ENCODE measurements at regions of chr20 and their contacts with region 1.

Region 1: DNA sequence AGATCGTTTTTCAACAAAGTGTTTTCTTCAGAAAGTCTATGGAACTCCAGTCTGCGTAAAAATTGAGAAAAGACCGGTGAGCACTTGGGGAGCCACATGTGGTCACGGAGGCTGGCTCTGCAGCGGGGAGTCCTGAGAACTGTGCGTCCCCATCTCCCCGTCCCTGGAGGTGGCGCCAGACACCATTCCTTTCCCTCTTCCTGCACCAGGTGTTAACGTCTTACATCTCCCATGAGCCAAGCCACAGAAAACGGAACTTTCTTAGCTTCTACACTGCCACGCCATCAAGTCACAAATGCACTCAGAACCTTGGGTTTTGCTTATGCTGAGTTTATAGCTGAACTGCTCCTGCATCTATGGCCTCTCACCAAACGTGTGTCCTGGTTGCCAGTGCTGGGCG is 62.6 kb downstream of the GINS1 start:
- DNase-seq: peak; percentile 18
- H3K4me3 ChIP-seq: no peak overlapping the region
- H3K27ac ChIP-seq: no peak overlapping the region
- H3K4me1 ChIP-seq: no peaks in the 10 kb centered on the region
- H3K27me3 ChIP-seq: no peaks in the 10 kb centered on the region
- CTCF ChIP-seq: peak; percentile 49 to 76

Region 2: GRCh38 chr20:25294459-25295385 is 175.3 kb before region 1 on chr20:
- CTCF ChIA-PET with region 1: no interaction called
- dilution Hi-C with region 1: no loop called
- in situ Hi-C with region 1: no loop called
- intact Hi-C with region 1: no loop called
- DNase-seq: no peak
- H3K4me3 ChIP-seq: no peak overlapping the region
- H3K27ac ChIP-seq: no peak overlapping the region
- H3K4me1 ChIP-seq: peaks cover 62% of the 10 kb centered on the region
- H3K27me3 ChIP-seq: no peaks in the 10 kb centered on the region
- CTCF ChIP-seq: peak; percentile 54 to 64

Region 3: DNA sequence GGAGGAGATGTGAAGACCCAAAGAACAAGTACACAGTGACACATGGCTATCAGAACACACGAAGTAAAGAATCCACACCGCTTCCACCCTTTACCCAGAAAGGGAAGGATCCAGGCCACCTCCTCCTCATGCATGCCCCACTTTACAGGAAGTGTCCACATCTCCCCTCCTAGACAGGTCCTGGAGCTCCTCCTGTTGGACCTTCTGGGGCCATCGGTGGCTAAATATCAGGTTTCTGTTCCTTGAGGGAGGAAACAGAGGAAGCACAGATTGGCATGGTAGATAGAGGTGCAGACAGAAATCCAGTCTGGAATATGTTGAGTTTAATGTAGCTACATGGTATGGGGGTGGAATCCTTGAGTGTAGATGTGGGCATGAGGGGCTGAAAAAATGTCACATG is 104.4 kb after region 1 on chr20:
- CTCF ChIA-PET with region 1: interaction called, 3 read pairs
- dilution Hi-C with region 1: no loop called
- in situ Hi-C with region 1: loop called in 1 of 2 experiments (anchors 25 kb)
- intact Hi-C with region 1: no loop called
- DNase-seq: no peak
- H3K4me3 ChIP-seq: no peak overlapping the region
- H3K27ac ChIP-seq: no peak overlapping the region
- H3K4me1 ChIP-seq: no peaks in the 10 kb centered on the region
- H3K27me3 ChIP-seq: no peaks in the 10 kb centered on the region
- CTCF ChIP-seq: peak in 1 of 2 donors; percentile 17

Region 4: DNA sequence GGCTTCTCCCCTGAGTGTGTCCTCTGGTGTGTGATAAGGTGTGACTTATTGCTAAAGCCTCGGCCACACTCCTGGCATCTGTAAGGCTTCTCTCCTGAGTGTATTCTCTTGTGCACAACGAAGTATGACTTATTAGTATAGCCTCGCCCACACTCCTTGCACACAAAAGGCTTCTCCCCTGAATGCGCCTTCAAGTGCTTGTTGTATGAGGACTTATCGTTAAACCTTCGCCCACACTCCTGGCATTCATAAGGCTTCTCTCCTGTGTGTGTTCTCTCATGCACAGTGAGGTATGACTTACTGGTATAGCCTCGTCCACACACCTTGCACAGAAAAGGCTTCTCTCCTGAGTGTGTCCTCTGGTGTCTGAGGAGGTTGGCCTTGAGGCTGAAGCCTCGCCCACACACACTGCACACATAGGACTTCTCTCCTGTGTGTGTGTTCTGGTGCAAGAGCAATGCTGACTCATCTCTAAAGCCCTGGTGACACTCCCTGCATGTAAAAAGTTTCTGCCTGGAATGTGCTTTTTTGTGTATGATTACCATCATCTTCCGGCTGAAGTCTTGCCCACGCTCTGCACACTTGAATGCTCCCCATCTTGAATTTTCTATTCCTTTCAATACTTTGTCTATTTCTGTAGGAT is 206.2 kb after region 1 on chr20:
- CTCF ChIA-PET with region 1: no interaction called
- dilution Hi-C with region 1: no loop called
- in situ Hi-C with region 1: no loop called
- intact Hi-C with region 1: no loop called
- DNase-seq: peak; percentile 50
- H3K4me3 ChIP-seq: no peak overlapping the region
- H3K27ac ChIP-seq: no peak overlapping the region
- H3K4me1 ChIP-seq: peaks cover 8% of the 10 kb centered on the region
- H3K27me3 ChIP-seq: no peaks in the 10 kb centered on the region
- CTCF ChIP-seq: no peak